ENCODE measurements at regions of chr1 and their contacts with region 1.

Region 1: DNA sequence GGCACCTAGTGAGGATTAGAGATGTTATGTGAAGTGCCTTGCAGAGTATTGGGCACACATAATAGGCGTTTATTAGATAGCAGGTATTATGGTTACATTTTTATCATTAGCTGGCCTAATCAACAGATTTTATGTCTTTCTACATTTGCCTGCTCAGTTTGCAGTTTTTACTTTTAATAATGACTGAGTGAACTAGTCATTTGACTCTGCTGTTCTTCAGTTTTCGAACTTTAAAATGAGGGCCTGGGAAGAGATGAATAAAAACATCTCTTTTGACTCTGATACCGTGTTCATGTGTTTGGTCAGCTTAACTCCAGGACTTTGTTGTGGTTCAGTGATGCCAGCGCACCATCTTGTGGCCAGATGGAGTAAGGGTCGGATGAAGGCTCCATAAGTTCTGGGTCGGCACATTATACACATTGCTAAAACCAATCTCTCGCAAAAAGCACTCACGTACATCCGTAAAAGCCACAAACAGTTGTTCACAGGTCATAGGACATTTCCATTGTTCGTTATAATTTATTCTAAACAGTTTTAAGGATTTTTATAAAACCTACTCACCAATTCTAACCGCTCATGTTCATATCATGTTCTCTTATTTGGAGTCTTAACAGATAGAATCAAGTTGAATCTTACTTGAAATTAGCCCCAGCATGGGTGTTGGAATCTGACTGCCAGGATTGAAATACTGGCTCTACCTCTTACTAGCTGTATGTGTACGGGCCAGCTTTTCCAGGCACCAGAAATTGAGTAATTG is 78.4 kb upstream of the GPR88 start:
- DNase-seq: peak; percentile 86
- ATAC-seq: peak; percentile 85
- H3K4me3 Mint-ChIP-seq: no peak overlapping the region
- H3K27ac Mint-ChIP-seq: no peak overlapping the region
- H3K4me1 Mint-ChIP-seq: peaks cover 50% of the 10 kb centered on the region
- H3K27me3 Mint-ChIP-seq: no peaks in the 10 kb centered on the region

Region 2: DNA sequence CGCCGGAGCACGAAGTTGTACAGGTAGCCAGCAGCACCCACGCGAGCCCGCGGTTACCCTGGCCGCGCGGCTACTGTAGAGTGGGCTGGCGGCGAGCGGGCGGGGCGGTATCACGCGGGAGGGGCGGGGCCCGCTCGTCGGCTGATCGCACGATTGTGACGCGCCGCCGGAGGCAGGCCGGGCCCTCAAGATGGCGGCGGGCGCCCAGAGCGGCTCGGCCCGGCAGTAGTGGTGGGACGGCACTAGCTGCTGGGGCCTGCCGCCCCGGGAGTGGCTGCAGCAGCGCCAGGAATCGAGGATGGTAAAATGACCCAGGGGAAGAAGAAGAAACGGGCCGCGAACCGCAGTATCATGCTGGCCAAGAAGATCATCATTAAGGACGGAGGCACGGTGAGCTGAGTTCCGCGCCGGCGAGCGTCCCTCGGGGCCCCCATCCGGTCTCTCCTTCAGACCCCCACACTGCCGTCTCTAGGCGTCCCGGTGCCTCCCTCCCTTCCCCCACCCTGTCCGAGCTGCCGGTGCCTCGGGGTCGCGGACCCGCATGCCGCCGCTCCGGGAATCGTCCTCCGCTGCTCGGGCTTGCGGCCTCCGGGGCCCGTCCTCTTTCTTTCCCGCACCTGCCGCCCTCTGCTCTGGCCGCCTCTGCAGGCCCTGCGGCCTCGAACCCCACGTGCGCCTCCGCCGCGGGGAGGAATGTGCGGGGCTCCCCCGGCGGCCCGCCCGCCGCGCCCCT is 421.4 kb before region 1 on chr1:
- CTCF ChIA-PET with region 1: no interaction called
- POLR2A ChIA-PET with region 1: no interaction called
- intact Hi-C with region 1: loop called in 1 of 2 experiments (anchors 5 kb)
- DNase-seq: peak; percentile 95
- ATAC-seq: peak; percentile 80
- H3K4me3 Mint-ChIP-seq: peak overlapping the region; percentile 95
- H3K27ac Mint-ChIP-seq: peak overlapping the region; percentile 98
- H3K4me1 Mint-ChIP-seq: peaks cover 51% of the 10 kb centered on the region
- H3K27me3 Mint-ChIP-seq: no peaks in the 10 kb centered on the region

Region 3: GRCh38 chr1:100292711-100293110 is 166.8 kb before region 1 on chr1:
- CTCF ChIA-PET with region 1: interaction called, 9 read pairs
- POLR2A ChIA-PET with region 1: no interaction called
- intact Hi-C with region 1: loop called in 1 of 2 experiments (anchors 1 kb)
- DNase-seq: no peak
- ATAC-seq: peak; percentile 65
- H3K4me3 Mint-ChIP-seq: no peak overlapping the region
- H3K27ac Mint-ChIP-seq: peak overlapping the region; percentile 59
- H3K4me1 Mint-ChIP-seq: peaks cover 8% of the 10 kb centered on the region
- H3K27me3 Mint-ChIP-seq: no peaks in the 10 kb centered on the region

Region 4: GRCh38 chr1:100364697-100365096 is 94.8 kb before region 1 on chr1:
- CTCF ChIA-PET with region 1: interaction called, 16 read pairs
- POLR2A ChIA-PET with region 1: interaction called, 15 read pairs
- intact Hi-C with region 1: no loop called
- DNase-seq: no peak
- ATAC-seq: no peak
- H3K4me3 Mint-ChIP-seq: no peak overlapping the region
- H3K27ac Mint-ChIP-seq: peak overlapping the region; percentile 75
- H3K4me1 Mint-ChIP-seq: peaks cover 75% of the 10 kb centered on the region
- H3K27me3 Mint-ChIP-seq: no peaks in the 10 kb centered on the region

Region 5: GRCh38 chr1:100443811-100444571 is 15.5 kb before region 1 on chr1:
- CTCF ChIA-PET with region 1: interaction called, 25 read pairs
- POLR2A ChIA-PET with region 1: no interaction called
- intact Hi-C with region 1: loop called in 1 of 2 experiments (anchors 1 kb)
- DNase-seq: peak; percentile 49
- ATAC-seq: peak; percentile 79
- H3K4me3 Mint-ChIP-seq: peak overlapping the region; percentile 68
- H3K27ac Mint-ChIP-seq: peak overlapping the region; percentile 93
- H3K4me1 Mint-ChIP-seq: peaks cover 84% of the 10 kb centered on the region
- H3K27me3 Mint-ChIP-seq: no peaks in the 10 kb centered on the region

Region 6: DNA sequence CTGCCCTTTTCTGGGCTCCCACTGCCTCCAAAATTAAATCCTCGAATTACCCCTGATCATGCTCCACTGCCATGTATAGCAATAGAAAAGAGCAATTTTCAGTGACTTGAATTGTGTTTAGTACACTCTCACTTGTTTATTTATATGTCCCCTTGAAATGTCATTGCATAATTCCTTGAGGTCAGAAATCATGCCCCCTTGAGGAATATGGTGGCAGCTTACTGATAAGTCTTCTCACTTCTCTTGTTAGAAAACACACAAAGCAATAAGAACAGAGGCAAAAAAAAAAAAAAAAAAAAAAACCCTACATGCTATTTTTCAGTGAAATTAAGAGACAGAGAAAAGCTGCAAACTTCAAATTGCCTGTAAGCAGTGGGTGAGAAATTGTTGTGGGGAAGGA is 115.9 kb after region 1 on chr1:
- CTCF ChIA-PET with region 1: no interaction called
- POLR2A ChIA-PET with region 1: no interaction called
- intact Hi-C with region 1: no loop called
- DNase-seq: no peak
- ATAC-seq: no peak
- H3K4me3 Mint-ChIP-seq: no peak overlapping the region
- H3K27ac Mint-ChIP-seq: no peak overlapping the region
- H3K4me1 Mint-ChIP-seq: no peaks in the 10 kb centered on the region
- H3K27me3 Mint-ChIP-seq: peaks cover 8% of the 10 kb centered on the region

Region 7: GRCh38 chr1:100866041-100866900 is 406.7 kb after region 1 on chr1:
- CTCF ChIA-PET with region 1: interaction called, 86 read pairs
- POLR2A ChIA-PET with region 1: no interaction called
- intact Hi-C with region 1: loop called (anchors 1 kb)
- DNase-seq: no peak
- ATAC-seq: no peak
- H3K4me3 Mint-ChIP-seq: no peak overlapping the region
- H3K27ac Mint-ChIP-seq: no peak overlapping the region
- H3K4me1 Mint-ChIP-seq: no peaks in the 10 kb centered on the region
- H3K27me3 Mint-ChIP-seq: no peaks in the 10 kb centered on the region

Measured in activated CD4-positive, alpha-beta T cell treated with anti-CD3 and anti-CD28 coated beads for 36 hours (primary cell).